ENCODE measurements at regions of chr3 and their contacts with region 1.

Region 1: DNA sequence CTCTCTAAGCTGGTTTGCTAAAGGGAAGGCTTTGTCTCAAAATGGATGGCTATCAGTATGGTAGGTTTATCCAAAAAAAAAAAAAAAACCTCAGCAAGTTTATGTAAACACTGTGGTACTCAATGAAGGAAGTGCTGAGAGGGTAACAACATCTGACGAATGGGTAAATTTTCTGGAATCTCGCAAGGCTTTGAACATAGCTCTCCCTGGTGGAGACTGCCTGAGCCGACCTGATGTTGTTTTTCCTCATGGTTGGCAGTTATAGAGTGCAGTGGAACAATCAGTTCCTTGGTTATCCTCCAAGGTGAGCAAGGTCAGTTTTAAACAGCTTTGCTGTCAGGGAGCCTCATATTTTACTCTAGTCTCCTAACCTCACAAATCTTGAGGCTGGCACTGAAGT is 94.6 kb downstream of the ZPLD1 start:
- DNase-seq: peak; percentile 54
- H3K4me3 Mint-ChIP-seq: no peak overlapping the region
- H3K27ac Mint-ChIP-seq: no peak overlapping the region
- H3K4me1 Mint-ChIP-seq: peaks cover 13% of the 10 kb centered on the region
- H3K27me3 Mint-ChIP-seq: no peaks in the 10 kb centered on the region
- CTCF ChIP-seq: peak; percentile 25

Region 2: DNA sequence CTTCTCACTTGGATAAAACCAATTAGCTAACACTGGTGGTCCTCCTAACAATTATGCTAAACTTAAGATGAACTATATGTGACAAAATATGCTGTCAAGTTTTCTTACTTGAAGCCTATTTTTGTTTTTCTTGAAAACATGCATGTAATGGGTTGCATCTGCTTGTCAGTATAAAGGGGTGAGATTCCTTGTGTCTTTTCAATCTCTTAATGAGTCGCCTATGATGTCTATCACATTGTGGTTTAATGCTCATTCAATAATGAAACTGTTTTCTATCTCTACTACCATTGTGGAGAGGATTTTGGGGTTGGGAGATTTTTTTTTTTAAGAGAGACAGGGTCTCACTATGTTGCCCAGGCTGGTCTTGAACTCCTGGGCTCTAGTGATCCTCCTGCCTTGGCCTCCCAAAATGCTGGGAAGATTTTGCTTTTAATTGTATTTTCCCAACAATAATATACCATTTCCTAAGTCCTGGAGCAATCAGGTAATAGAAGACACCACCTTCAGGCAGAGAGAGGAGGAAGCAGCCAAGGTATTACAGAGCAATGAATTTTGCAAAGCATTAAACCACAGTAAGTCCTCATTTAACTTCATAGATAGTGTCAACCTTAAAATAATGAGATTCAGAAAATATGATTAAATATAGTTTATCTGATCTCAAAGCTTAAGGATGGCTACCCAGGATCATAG is 985.1 kb before region 1 on chr3:
- CTCF ChIA-PET with region 1: no interaction called
- POLR2A ChIA-PET with region 1: no interaction called
- intact Hi-C with region 1: no loop called
- DNase-seq: peak; percentile 4
- H3K4me3 Mint-ChIP-seq: no peak overlapping the region
- H3K27ac Mint-ChIP-seq: no peak overlapping the region
- H3K4me1 Mint-ChIP-seq: no peaks in the 10 kb centered on the region
- H3K27me3 Mint-ChIP-seq: peaks cover 10% of the 10 kb centered on the region
- CTCF ChIP-seq: no peak

Region 3: DNA sequence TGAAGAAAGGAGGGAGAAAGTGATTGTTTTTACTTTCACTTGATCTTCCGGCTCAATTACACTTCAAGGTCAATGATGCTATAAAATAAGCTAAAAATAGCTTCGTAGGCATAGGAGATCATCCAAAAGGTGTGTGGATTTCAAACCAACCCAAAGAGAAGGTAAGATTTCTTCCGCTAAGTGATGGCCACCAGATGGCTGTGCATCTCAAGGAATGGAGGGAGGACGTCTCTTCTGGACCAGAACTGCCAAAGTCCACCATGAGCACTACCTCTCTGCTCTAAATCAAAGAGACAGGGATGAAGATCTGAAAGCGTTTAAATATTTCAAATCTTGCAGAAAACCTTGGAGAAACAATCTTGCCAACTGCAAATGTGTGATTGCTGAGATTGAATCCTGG is 293.8 kb before region 1 on chr3:
- CTCF ChIA-PET with region 1: interaction called, 672 read pairs
- POLR2A ChIA-PET with region 1: no interaction called
- intact Hi-C with region 1: loop called (anchors 1 kb)
- DNase-seq: peak; percentile 41
- H3K4me3 Mint-ChIP-seq: no peak overlapping the region
- H3K27ac Mint-ChIP-seq: no peak overlapping the region
- H3K4me1 Mint-ChIP-seq: no peaks in the 10 kb centered on the region
- H3K27me3 Mint-ChIP-seq: no peaks in the 10 kb centered on the region
- CTCF ChIP-seq: peak; percentile 66

Region 4: DNA sequence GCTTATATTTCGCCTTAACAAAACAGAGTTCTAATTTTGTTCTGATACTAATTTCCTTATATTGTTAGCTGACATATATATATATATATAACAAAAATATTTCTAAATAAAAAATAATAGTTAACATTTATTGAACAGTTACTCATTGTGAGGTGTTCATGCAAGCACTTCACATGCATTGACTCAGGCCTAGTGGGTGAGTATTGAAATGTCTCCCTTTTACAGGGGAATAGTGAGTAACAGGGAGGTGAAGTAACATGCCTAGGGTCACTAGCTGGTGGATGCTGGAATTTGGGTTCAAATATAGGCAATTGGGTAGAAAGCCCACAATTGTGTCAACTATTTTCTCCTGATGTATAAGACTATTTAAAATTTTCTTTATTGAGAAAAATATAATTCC is 197.2 kb before region 1 on chr3:
- CTCF ChIA-PET with region 1: no interaction called
- POLR2A ChIA-PET with region 1: no interaction called
- intact Hi-C with region 1: no loop called
- DNase-seq: peak; percentile 9
- H3K4me3 Mint-ChIP-seq: no peak overlapping the region
- H3K27ac Mint-ChIP-seq: no peak overlapping the region
- H3K4me1 Mint-ChIP-seq: no peaks in the 10 kb centered on the region
- H3K27me3 Mint-ChIP-seq: no peaks in the 10 kb centered on the region
- CTCF ChIP-seq: no peak

Measured in MCF 10A (cell line).